A673 (cell line): ENCODE measurements at regions of chr6 and their contacts with region 1.

Region 1: GRCh38 chr6:161694995-161695394 is 421.1 kb upstream of the AGPAT4 start:
- DNase-seq: peak; percentile 42
- H3K4me3 ChIP-seq: no peak overlapping the region
- H3K27ac ChIP-seq: no peak overlapping the region
- H3K4me1 ChIP-seq: no peaks in the 10 kb centered on the region
- H3K27me3 ChIP-seq: no peaks in the 10 kb centered on the region
- CTCF ChIP-seq: peak; percentile 61

Region 2: DNA sequence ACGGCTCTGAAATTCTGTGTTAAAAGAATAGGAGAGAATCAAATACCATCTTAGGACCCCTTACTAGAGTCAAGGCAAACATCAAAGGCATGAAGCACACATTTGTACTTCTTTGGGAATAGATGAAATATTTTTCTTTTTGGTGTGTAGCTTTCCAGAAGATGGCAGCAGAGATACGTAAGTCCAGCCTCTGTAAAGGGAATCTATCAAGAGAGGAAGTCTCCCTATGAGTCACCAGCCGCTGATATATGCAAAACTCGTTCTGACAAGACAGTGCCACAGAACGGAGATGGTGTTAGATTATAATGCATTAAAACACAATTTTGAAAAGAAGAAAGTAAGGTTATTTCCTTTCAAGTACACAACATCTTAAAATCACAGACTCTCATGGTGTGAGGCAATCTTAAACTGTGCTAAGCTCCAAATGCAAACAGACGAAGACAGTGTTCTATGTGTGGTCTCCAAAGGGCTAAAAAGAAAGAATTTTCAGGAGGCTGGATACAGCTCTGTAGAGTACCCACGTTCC is 301.1 kb before region 1 on chr6:
- CTCF ChIA-PET with region 1: no interaction called
- POLR2A ChIA-PET with region 1: no interaction called
- intact Hi-C with region 1: loop called (anchors 1 kb)
- DNase-seq: peak; percentile 86
- H3K4me3 ChIP-seq: no peak overlapping the region
- H3K27ac ChIP-seq: no peak overlapping the region
- H3K4me1 ChIP-seq: no peaks in the 10 kb centered on the region
- H3K27me3 ChIP-seq: no peaks in the 10 kb centered on the region
- CTCF ChIP-seq: peak; percentile 65

Region 3: GRCh38 chr6:161418463-161418945 is 276.5 kb before region 1 on chr6:
- CTCF ChIA-PET with region 1: interaction called, 14 read pairs
- POLR2A ChIA-PET with region 1: no interaction called
- intact Hi-C with region 1: loop called (anchors 1 kb)
- DNase-seq: peak; percentile 79
- H3K4me3 ChIP-seq: no peak overlapping the region
- H3K27ac ChIP-seq: no peak overlapping the region
- H3K4me1 ChIP-seq: peaks cover 10% of the 10 kb centered on the region
- H3K27me3 ChIP-seq: peaks cover 3% of the 10 kb centered on the region
- CTCF ChIP-seq: peak; percentile 77

Region 4: DNA sequence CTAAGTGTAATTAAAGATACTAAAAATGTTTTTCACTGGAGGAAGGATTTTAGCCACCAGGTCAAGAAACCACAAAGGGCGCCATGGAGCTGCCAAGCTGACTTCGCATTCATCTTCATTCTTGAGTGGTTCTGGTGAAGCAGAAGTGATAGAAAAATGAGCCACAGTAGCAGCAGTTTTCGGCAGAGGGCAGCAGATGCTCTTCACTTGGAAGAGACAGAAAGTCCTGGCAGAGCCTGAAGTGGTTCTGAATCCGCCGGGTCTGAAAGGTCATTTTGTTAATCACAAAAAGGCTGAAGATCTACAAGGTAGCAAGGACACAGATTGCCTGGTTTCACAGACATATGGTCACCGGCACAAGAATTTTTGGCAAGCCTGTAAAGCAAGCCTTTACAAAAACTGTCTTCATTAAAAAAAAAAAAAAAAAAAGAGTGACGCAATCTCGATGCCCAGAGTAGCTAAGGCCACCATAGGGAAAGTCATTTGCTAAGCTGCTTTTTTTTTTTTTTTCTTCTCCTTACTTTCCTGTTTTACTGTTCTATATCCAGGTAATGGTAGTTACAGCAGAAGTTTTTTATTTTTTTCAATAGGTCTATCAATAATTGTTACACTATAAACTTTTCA is 76.1 kb before region 1 on chr6:
- CTCF ChIA-PET with region 1: interaction called, 9 read pairs
- POLR2A ChIA-PET with region 1: no interaction called
- intact Hi-C with region 1: loop called (anchors 1 kb)
- DNase-seq: peak; percentile 74
- H3K4me3 ChIP-seq: peak overlapping the region; percentile 17
- H3K27ac ChIP-seq: no peak overlapping the region
- H3K4me1 ChIP-seq: no peaks in the 10 kb centered on the region
- H3K27me3 ChIP-seq: peaks cover 7% of the 10 kb centered on the region
- CTCF ChIP-seq: peak; percentile 69